GM12878 (cell line): ENCODE measurements at regions of chr5 and their contacts with region 1.

Region 1: GRCh38 chr5:54415896-54416601 is 39.5 kb upstream of the HSPB3 start:
- DNase-seq: no peak
- ATAC-seq: peak; percentile 46
- H3K4me3 ChIP-seq: no peak overlapping the region
- H3K27ac ChIP-seq: no peak overlapping the region
- H3K4me1 ChIP-seq: no peaks in the 10 kb centered on the region
- H3K27me3 ChIP-seq: no peaks in the 10 kb centered on the region; a peak in 1 of 4 replicates
- CTCF ChIP-seq: no peak
- EP300 ChIP-seq: no peak
- POLR2A ChIP-seq: no peak
- RAD21 ChIP-seq: no peak

Region 2: GRCh38 chr5:53481887-53482716 is 933.9 kb before region 1 on chr5:
- CTCF ChIA-PET with region 1: no interaction called
- POLR2A ChIA-PET with region 1: no interaction called
- RAD21 ChIA-PET with region 1: no interaction called
- SMC1A ChIA-PET with region 1: no interaction called
- in situ Hi-C with region 1: no loop called
- intact Hi-C with region 1: loop called (anchors 5 kb)
- DNase-seq: no peak
- ATAC-seq: peak; percentile 82
- H3K4me3 ChIP-seq: peak overlapping the region; percentile 71
- H3K27ac ChIP-seq: no peak overlapping the region
- H3K4me1 ChIP-seq: peaks cover 8% of the 10 kb centered on the region
- H3K27me3 ChIP-seq: peaks cover 4 to 19% of the 10 kb centered on the region in 2 experiments
- CTCF ChIP-seq: peak in 1 of 3 experiments; percentile 15; a peak in 2 of 6 replicates
- EP300 ChIP-seq: no peak
- POLR2A ChIP-seq: no peak
- RAD21 ChIP-seq: no peak

Region 3: GRCh38 chr5:54243473-54244080 is 172.5 kb before region 1 on chr5:
- CTCF ChIA-PET with region 1: interaction called, 31 read pairs
- POLR2A ChIA-PET with region 1: no interaction called
- RAD21 ChIA-PET with region 1: interaction called, 13 read pairs
- SMC1A ChIA-PET with region 1: interaction called, 20 read pairs
- in situ Hi-C with region 1: no loop called
- intact Hi-C with region 1: loop called (anchors 1 kb)
- DNase-seq: no peak
- ATAC-seq: peak; percentile 84
- H3K4me3 ChIP-seq: no peak overlapping the region
- H3K27ac ChIP-seq: no peak overlapping the region
- H3K4me1 ChIP-seq: no peaks in the 10 kb centered on the region
- H3K27me3 ChIP-seq: no peaks in the 10 kb centered on the region
- CTCF ChIP-seq: peak; percentile 57 to 72 (median 72); a peak in 5 of 6 replicates
- EP300 ChIP-seq: no peak
- POLR2A ChIP-seq: no peak
- RAD21 ChIP-seq: peak; percentile 86

Region 4: DNA sequence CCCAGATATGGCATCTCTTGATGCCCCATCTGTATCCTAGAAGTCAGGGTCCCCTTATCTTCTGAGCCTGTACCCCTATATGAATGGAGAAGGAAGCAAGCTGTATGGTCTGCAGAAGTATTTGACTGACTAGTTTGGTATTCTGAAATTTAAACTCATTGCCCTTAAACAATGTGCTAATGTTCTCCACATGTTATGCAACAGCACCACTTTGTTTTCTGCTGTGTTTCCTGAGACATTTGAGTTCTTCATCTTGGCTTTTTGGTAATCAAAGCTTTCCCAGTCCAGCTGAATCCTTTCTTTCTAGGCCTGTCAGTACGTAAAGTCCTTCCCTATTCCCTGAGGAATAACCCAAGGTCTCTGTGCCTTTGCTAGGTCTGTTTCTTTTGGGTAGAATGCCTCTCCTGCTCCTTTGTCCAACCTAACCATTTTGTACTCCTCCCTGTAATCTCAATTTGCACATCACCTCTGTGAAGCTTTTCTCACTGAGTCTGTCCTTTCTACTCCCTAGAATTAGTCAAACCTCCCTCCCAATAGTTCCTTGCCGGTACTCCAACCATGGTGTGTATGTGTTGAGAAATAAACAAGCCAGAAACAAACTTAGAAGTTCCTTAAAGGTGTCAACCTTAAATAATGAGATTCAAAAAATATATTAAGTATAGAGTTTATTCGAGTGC is 32.7 kb before region 1 on chr5:
- CTCF ChIA-PET with region 1: interaction called, 23 read pairs
- POLR2A ChIA-PET with region 1: interaction called, 8 read pairs
- RAD21 ChIA-PET with region 1: interaction called, 17 read pairs
- SMC1A ChIA-PET with region 1: interaction called, 17 read pairs
- in situ Hi-C with region 1: no loop called
- intact Hi-C with region 1: no loop called
- DNase-seq: no peak
- ATAC-seq: no peak
- H3K4me3 ChIP-seq: no peak overlapping the region
- H3K27ac ChIP-seq: no peak overlapping the region
- H3K4me1 ChIP-seq: no peaks in the 10 kb centered on the region
- H3K27me3 ChIP-seq: no peaks in the 10 kb centered on the region
- CTCF ChIP-seq: no peak
- EP300 ChIP-seq: no peak
- POLR2A ChIP-seq: no peak
- RAD21 ChIP-seq: no peak

Region 5: GRCh38 chr5:54401515-54401914 is 14.5 kb before region 1 on chr5:
- CTCF ChIA-PET with region 1: interaction called, 22 read pairs
- POLR2A ChIA-PET with region 1: interaction called, 4 read pairs
- RAD21 ChIA-PET with region 1: interaction called, 33 read pairs
- SMC1A ChIA-PET with region 1: interaction called, 71 read pairs
- in situ Hi-C with region 1: no loop called
- intact Hi-C with region 1: no loop called
- DNase-seq: no peak
- ATAC-seq: peak; percentile 96
- H3K4me3 ChIP-seq: no peak overlapping the region
- H3K27ac ChIP-seq: no peak overlapping the region
- H3K4me1 ChIP-seq: peaks cover 5% of the 10 kb centered on the region
- H3K27me3 ChIP-seq: no peaks in the 10 kb centered on the region
- CTCF ChIP-seq: no peak
- EP300 ChIP-seq: no peak
- POLR2A ChIP-seq: no peak
- RAD21 ChIP-seq: no peak

Region 6: DNA sequence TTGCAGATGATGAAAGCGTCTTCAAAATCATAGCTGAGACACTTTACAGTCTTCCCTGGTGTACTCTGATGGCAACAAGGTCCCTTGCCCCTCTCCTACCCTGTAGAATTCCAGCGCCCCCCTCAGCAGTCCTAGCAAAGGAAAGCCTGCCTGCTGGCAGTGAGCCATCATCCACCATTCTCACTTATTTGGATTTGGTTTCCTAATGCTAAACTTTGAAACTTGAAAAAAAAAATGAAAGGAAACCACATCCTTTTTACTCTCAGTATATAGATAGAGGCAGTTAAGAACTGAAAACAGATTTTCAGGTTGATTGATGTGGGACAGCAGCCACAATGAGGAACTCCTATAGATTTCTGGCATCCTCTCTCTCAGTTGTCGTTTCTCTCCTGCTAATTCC is 686.3 kb after region 1 on chr5 and contains the start of gene GZMA:
- CTCF ChIA-PET with region 1: no interaction called
- POLR2A ChIA-PET with region 1: no interaction called
- RAD21 ChIA-PET with region 1: no interaction called
- SMC1A ChIA-PET with region 1: no interaction called
- in situ Hi-C with region 1: no loop called
- intact Hi-C with region 1: no loop called
- DNase-seq: no peak
- ATAC-seq: no peak
- H3K4me3 ChIP-seq: no peak within 1 kb of the TSS
- H3K27ac ChIP-seq: no peak within 1 kb of the TSS
- H3K4me1 ChIP-seq: no peaks in the 10 kb centered on the region
- H3K27me3 ChIP-seq: no peaks in the 10 kb centered on the region
- CTCF ChIP-seq: no peak
- EP300 ChIP-seq: no peak
- POLR2A ChIP-seq: no peak
- RAD21 ChIP-seq: no peak
- polyA plus RNA-seq, gene GZMA: not detected